Activated CD8-positive, alpha-beta T cell treated with anti-CD3 and anti-CD28 coated beads, Interleukin-2, amount 10 ng/mL, durations not matched to agents 7 days and 5 days (primary cell): ENCODE measurements at regions of chr16 and their contacts with region 1.

Region 1: DNA sequence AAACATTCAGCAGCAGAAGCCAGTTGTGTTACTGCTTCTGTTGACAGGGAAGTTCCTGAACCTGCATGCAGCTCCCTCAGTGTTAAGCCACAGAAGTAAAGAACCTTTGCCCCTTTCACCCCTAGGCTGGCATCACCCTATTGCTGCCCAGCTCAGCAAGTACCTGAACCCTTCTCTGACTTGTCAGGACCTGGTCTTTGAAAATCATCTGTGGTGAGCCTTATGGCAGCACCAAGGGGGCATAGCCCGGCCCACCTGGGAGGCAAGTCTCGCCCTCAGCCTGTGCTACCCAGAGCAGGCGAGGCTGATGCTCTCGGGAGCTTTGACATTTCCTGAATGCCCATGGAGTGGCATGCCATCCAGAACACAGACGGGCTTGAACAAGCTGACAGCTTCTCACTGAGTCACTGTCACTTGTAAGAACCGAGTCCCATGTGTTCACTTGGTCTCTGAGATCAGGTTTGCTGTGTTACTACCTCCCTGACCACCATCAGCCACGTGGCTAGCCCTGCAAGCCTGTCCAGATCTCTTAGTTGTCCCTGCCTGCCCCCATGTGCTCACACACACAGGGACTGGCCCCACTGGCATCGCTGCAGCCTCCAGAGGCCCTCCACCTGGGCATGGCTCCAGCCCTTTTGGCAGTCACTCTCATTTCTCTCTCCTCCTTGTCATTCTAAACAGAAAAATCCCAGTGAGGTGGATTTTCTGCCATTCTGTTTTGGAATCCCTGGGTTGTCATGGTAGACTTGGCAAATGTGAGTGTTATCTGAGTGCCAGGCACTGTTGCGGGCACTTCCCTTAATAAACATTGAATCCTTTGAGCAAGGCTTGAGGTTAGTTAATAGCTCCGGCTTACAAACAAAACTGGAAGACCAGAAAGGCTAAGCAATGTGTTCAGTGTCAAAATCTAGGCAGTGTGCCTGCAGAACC is 2.9 kb upstream of the CARMIL2 start:
- DNase-seq: no peak
- ATAC-seq: no peak
- H3K4me3 Mint-ChIP-seq: no peak overlapping the region
- H3K27ac Mint-ChIP-seq: no peak overlapping the region
- H3K4me1 Mint-ChIP-seq: peaks cover 19% of the 10 kb centered on the region
- H3K27me3 Mint-ChIP-seq: no peaks in the 10 kb centered on the region

Region 2: DNA sequence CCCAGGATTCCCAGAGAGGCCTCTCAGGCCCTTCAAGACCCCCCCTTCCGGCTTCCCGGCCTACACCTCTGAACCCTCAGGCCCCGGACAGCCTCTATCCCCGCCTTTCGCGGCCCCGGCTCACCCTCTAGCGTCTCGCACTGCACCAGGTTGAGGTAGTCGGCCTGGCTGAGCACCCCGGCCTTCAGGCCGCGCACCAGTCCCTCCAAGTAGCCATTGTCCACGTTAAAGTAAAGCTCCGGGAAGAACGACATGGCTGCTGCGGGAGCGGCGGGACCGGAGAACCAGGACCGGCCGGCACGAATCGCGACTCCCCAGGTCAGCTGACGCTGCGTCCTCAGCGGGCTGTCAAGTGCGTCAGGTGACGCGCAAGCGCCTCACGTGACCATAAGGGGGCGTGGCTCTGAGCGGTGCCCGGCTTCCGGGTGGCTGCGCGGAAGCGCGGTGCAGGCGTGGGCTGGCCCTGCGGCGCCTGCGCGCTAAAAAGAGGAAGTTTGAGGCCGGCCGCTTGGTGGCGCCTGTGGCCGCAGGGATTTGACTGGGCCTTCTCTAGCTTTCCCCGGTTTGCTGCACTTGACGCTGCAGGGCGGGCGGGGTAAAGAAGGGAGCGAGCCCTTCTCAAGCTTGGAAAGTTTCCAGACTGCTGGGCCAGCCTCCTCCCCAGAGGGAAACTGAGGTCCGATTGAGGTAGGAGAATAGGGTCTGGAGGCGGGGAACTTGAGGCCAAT is 161.0 kb before region 1 on chr16 and contains the start of gene ATP6V0D1:
- CTCF ChIA-PET with region 1: interaction called, 14 read pairs
- POLR2A ChIA-PET with region 1: interaction called, 6 read pairs
- DNase-seq: peak; percentile 99
- ATAC-seq: peak; percentile 89
- H3K4me3 Mint-ChIP-seq: peak within 1 kb of the TSS; percentile 98
- H3K27ac Mint-ChIP-seq: peak within 1 kb of the TSS; percentile 99
- H3K4me1 Mint-ChIP-seq: peaks cover 38% of the 10 kb centered on the region
- H3K27me3 Mint-ChIP-seq: no peaks in the 10 kb centered on the region
- total RNA-seq, gene ATP6V0D1: 52.7 to 58.1 TPM

Region 3: DNA sequence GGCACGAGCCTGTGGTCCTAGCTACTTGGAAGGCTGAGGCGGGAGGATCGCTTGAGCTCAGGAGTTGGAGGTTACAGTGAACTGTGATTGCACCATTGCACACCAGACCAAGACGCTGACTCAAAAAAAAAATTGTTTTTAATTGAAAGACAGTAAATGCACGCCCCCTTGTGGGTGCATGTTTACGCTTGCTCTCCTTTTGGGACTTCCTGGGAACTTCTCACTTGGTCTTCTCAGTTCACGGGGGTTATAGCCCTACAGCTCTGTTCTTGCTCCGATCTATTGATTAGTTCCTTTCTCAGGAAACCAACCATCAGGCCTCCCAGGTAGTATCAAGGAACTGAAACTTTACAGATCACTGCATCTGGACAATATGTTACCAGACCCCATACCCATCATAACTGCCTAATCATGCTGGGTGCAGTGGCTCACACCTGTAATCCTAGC is 127.6 kb before region 1 on chr16:
- CTCF ChIA-PET with region 1: interaction called, 129 read pairs
- POLR2A ChIA-PET with region 1: no interaction called
- DNase-seq: peak; percentile 90
- ATAC-seq: peak; percentile 82
- H3K4me3 Mint-ChIP-seq: no peak overlapping the region
- H3K27ac Mint-ChIP-seq: peak overlapping the region; percentile 84
- H3K4me1 Mint-ChIP-seq: peaks cover 36% of the 10 kb centered on the region
- H3K27me3 Mint-ChIP-seq: no peaks in the 10 kb centered on the region

Region 4: DNA sequence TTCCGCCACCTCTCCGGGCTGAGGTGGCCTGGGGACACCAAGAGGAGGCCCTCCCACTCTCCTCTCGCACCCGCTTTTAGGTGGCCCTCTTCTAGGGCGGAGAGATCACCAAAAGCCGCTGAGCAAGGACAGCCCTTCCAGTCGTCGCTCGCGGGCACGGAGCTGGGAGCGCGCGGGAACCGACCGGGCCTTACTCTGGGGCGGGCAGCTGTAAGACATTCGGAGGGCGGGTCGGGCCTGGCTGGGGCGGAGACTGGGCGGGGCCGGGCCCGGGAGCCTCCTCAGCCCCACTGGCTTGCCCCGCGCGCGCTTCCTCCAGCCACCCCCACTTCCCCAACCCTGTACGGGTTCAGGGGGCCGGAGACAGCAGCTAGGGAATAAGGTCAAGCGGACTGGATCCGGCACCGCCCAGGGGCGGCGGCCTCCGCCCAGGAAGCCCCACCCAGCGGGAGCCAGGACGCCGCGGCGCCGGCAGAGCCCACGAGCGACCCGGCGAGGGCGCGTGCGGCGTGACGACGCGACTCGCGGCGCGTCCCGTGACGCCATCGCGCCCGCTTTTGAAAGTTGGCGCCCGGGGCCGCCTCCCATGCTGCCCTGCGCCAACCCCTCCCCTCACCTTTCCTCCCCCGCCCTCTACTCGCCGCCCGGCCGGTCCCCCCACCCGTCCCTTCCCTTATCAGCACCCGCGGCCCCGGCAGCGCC is 80.1 kb before region 1 on chr16:
- CTCF ChIA-PET with region 1: interaction called, 123 read pairs
- POLR2A ChIA-PET with region 1: interaction called, 51 read pairs
- DNase-seq: peak; percentile 99
- ATAC-seq: peak; percentile 92
- H3K4me3 Mint-ChIP-seq: peak overlapping the region; percentile 88
- H3K27ac Mint-ChIP-seq: peak overlapping the region; percentile 95
- H3K4me1 Mint-ChIP-seq: peaks cover 43% of the 10 kb centered on the region
- H3K27me3 Mint-ChIP-seq: no peaks in the 10 kb centered on the region

Region 5: DNA sequence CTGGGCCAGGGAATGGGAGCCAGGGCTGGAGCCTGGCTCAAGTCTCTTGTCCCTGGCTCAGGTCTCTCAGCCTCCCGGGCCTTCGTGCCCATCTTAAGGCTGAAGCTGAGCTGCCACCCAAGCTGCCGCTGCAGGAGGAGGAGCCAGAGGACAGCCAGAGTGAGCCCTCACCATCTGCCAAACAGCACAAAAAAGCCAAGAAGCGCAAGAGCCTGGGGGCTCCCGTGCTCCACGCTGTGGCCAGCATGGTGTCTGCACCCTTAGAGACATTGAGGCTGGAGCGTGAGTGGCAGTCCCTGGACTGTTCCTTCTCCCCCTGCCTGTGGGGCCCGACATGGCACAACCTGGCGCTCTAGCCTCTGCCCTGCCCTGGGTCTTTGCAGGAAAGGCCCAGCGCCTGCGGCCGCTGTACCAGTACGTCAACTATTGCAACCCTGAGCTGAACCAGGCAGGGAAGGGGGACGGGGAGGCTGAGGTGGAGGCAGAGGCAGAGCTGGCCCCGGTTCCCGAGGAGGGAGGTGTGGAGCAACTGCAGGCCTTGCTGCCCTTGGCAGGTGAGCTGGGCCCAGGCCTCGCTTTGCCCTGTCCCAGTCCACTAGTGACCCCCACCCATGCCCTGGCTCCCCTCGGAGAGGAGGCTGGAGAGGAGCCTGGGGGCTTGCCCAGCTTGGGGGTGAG is 25.9 kb after region 1 on chr16:
- CTCF ChIA-PET with region 1: interaction called, 22 read pairs
- POLR2A ChIA-PET with region 1: no interaction called
- DNase-seq: peak; percentile 90
- ATAC-seq: peak; percentile 85
- H3K4me3 Mint-ChIP-seq: peak overlapping the region; percentile 83
- H3K27ac Mint-ChIP-seq: peak overlapping the region; percentile 55
- H3K4me1 Mint-ChIP-seq: peaks cover 31% of the 10 kb centered on the region
- H3K27me3 Mint-ChIP-seq: no peaks in the 10 kb centered on the region